Activated CD4-positive, alpha-beta T cell treated with anti-CD3 and anti-CD28 coated beads for 36 hours (primary cell): ENCODE measurements at regions of chr2 and their contacts with region 1.

Region 1: GRCh38 chr2:171160119-171160955 is at the start of gene TLK1:
- DNase-seq: peak; percentile 87
- ATAC-seq: peak; percentile 64
- H3K4me3 Mint-ChIP-seq: peak within 1 kb of the TSS; percentile 95
- H3K27ac Mint-ChIP-seq: peak within 1 kb of the TSS; percentile 98
- H3K4me1 Mint-ChIP-seq: peaks cover 59% of the 10 kb centered on the region
- H3K27me3 Mint-ChIP-seq: no peaks in the 10 kb centered on the region
- total RNA-seq, gene TLK1: 71.8 to 83.7 TPM

Region 2: GRCh38 chr2:169824373-169825333 is 1335.7 kb before region 1 on chr2 and contains the start of gene METTL5:
- CTCF ChIA-PET with region 1: no interaction called
- POLR2A ChIA-PET with region 1: no interaction called
- intact Hi-C with region 1: loop called in 1 of 2 experiments (anchors 10 kb)
- DNase-seq: peak; percentile 89
- ATAC-seq: peak; percentile 72
- H3K4me3 Mint-ChIP-seq: peak within 1 kb of the TSS; percentile 83
- H3K27ac Mint-ChIP-seq: peak within 1 kb of the TSS; percentile 89
- H3K4me1 Mint-ChIP-seq: peaks cover 55% of the 10 kb centered on the region
- H3K27me3 Mint-ChIP-seq: no peaks in the 10 kb centered on the region
- total RNA-seq, gene METTL5: 129 to 165 TPM

Region 3: DNA sequence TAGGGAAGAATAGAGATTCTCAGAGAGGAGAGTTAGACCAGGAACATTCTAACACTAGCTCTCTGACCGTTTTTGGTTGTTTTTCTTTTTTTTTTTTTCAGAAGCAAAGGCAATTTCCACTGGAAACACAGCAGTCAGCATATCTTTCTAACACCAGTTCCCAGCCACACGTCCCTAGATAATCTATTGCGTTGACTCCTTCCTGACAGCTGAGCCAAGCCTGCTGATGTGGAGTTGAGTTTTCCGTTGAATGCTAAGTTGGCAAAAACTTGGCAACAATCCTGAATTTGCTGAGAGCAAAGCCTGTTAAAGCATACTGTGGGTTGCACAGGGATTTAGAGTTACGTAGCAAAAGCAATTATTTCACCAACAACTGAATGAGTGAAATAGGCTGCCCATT is 324.3 kb before region 1 on chr2:
- CTCF ChIA-PET with region 1: no interaction called
- POLR2A ChIA-PET with region 1: no interaction called
- intact Hi-C with region 1: no loop called
- DNase-seq: no peak
- ATAC-seq: no peak
- H3K4me3 Mint-ChIP-seq: no peak overlapping the region
- H3K27ac Mint-ChIP-seq: no peak overlapping the region
- H3K4me1 Mint-ChIP-seq: no peaks in the 10 kb centered on the region
- H3K27me3 Mint-ChIP-seq: peaks cover 6% of the 10 kb centered on the region

Region 4: DNA sequence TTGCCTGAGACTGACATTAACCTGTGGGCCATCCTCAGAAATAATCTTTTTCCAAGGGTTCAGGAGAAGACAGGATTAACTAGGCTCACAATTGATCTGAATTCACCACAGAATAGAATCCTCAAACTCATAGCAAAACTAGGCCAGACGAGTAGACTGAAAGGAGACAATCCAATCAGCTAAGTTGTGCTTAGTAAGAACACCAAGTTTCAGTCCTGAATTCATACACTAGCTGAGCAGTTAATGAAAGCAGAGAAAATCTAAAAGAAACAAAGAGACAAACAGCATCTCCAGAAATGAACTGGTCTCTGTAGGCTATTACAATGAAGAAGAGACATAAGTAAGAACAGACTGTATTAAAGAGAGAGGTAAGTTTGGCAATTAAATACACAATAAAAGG is 141.8 kb before region 1 on chr2:
- CTCF ChIA-PET with region 1: no interaction called
- POLR2A ChIA-PET with region 1: interaction called, 3 read pairs
- intact Hi-C with region 1: loop called in 1 of 2 experiments (anchors 2 kb)
- DNase-seq: no peak
- ATAC-seq: peak; percentile 97
- H3K4me3 Mint-ChIP-seq: peak overlapping the region; percentile 4
- H3K27ac Mint-ChIP-seq: peak overlapping the region; percentile 63
- H3K4me1 Mint-ChIP-seq: peaks cover 43% of the 10 kb centered on the region
- H3K27me3 Mint-ChIP-seq: no peaks in the 10 kb centered on the region

Region 5: DNA sequence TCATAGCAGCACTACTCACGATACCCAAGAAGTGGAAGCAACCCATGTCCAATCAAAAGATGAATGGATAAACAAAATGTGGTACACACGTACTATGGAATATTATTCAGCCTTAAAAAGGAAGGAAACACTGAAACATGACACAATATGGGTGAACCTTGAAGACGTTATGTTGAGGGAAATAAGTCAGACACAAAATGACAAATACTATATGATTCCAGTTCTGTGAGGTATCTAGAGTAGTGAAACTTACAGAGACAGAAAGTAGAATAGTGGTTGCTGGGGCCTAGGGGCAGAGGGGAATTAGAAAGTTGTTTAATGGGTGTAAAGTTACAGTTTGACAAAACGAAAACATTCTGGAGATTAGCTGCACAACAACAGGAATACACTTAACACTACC is 24.3 kb before region 1 on chr2:
- CTCF ChIA-PET with region 1: interaction called, 12 read pairs
- POLR2A ChIA-PET with region 1: interaction called, 3 read pairs
- intact Hi-C with region 1: loop called in 1 of 2 experiments (anchors 2 kb)
- DNase-seq: peak; percentile 41
- ATAC-seq: peak; percentile 93
- H3K4me3 Mint-ChIP-seq: peak overlapping the region; percentile 20
- H3K27ac Mint-ChIP-seq: peak overlapping the region; percentile 86
- H3K4me1 Mint-ChIP-seq: peaks cover 73% of the 10 kb centered on the region
- H3K27me3 Mint-ChIP-seq: no peaks in the 10 kb centered on the region

Region 6: DNA sequence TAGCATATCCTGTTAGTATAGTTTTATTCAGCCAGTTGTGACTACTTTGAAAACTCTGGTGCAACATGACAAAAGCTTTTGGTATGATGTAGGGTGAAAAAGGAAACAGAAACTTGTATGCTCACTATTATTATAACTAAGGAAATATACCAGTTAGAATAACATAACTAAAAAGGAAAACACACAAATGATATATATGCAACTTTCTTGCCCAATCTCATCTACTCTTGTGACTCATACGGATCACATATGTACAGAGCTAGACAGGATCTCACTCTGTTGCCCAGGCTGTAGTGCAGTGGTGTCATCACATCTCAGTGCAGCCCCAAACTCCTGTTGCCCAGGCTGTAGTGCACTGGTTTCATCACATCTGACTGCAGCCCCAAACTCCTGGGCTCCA is 12.8 kb after region 1 on chr2:
- CTCF ChIA-PET with region 1: interaction called, 4 read pairs
- POLR2A ChIA-PET with region 1: no interaction called
- intact Hi-C with region 1: loop called in 1 of 2 experiments (anchors 1 kb)
- DNase-seq: peak; percentile 57
- ATAC-seq: peak; percentile 97
- H3K4me3 Mint-ChIP-seq: no peak overlapping the region
- H3K27ac Mint-ChIP-seq: no peak overlapping the region
- H3K4me1 Mint-ChIP-seq: peaks cover 14% of the 10 kb centered on the region
- H3K27me3 Mint-ChIP-seq: no peaks in the 10 kb centered on the region

Region 7: GRCh38 chr2:171416009-171416926 is 255.9 kb after region 1 on chr2:
- CTCF ChIA-PET with region 1: interaction called, 14 read pairs
- POLR2A ChIA-PET with region 1: interaction called, 3 read pairs
- intact Hi-C with region 1: loop called (anchors 1 kb)
- DNase-seq: peak; percentile 93
- ATAC-seq: peak; percentile 98
- H3K4me3 Mint-ChIP-seq: peak overlapping the region; percentile 24
- H3K27ac Mint-ChIP-seq: peak overlapping the region; percentile 84
- H3K4me1 Mint-ChIP-seq: peaks cover 37% of the 10 kb centered on the region
- H3K27me3 Mint-ChIP-seq: no peaks in the 10 kb centered on the region